IMR-90 (cell line): ENCODE measurements at regions of chr5 and their contacts with region 1.

Region 1: DNA sequence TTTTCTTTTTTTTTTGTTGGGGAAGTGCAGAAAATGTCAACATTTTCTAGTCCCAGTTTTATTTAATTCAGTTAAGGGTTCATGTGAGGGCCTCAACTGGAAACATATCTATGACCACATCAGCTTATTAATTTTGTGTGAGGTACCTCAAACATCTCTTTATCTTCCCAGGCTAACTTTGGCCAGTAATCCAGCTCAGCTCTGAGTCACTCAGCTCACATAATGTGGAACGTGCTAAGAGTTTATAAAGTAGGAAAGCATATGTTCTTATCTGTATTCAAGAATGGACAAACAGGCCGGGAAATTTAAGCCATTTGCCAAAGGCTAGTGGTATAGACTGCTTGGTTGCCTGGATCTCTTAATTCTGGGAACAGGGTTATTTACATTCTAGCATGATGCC is 118.4 kb downstream of the INSYN2B start:
- DNase-seq: peak; percentile 96
- ATAC-seq: peak; percentile 95
- H3K4me3 ChIP-seq: no peak overlapping the region
- H3K27ac ChIP-seq: no peak overlapping the region
- H3K4me1 ChIP-seq: peaks cover 2% of the 10 kb centered on the region
- H3K27me3 ChIP-seq: no peaks in the 10 kb centered on the region
- CTCF ChIP-seq: no peak
- POLR2A ChIP-seq: no peak
- RAD21 ChIP-seq: peak; percentile 4; the same call in 1 of the 2 replicates

Region 2: GRCh38 chr5:169019871-169020501 is 841.9 kb before region 1 on chr5:
- CTCF ChIA-PET with region 1: no interaction called
- POLR2A ChIA-PET with region 1: no interaction called
- dilution Hi-C with region 1: no loop called
- in situ Hi-C with region 1: no loop called
- intact Hi-C with region 1: no loop called
- DNase-seq: no peak
- ATAC-seq: no peak
- H3K4me3 ChIP-seq: no peak overlapping the region
- H3K27ac ChIP-seq: no peak overlapping the region
- H3K4me1 ChIP-seq: no peaks in the 10 kb centered on the region
- H3K27me3 ChIP-seq: no peaks in the 10 kb centered on the region; the same call in 1 of the 2 replicates
- CTCF ChIP-seq: no peak
- POLR2A ChIP-seq: no peak
- RAD21 ChIP-seq: no peak

Region 3: DNA sequence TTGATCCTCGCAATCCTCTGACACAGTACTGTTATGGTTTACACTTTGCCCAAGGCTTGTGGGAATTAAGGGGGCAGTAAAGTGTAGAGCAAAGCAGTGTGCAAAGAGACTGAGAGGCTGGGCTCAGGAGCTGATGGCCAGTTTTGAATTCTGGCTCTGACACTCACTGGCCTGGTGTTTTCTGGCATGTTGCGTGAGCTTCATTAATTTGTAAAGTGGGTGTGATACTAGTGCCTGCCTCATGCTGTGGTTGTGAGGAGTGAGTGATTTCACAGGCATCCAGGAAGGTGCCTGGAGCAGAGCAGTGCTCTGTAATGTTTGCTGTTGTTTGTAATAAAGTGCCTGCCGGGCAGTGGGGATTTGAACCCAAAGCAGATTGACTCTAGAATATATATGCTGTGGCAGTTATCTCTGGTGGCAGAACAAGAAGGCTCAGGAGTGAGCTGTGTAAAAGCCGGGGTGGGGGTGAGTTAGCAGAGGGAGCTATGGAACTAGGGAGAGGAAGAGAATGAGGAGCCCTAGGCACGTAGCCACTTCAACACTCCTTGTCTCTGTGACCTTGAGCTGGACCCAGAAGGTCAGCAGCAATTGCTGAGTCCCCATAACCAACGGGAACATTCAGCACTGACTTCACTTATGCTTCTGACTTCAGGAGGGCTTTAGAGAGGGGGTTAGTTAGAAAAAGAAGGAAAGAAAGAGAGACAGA is 116.3 kb before region 1 on chr5:
- CTCF ChIA-PET with region 1: no interaction called
- POLR2A ChIA-PET with region 1: no interaction called
- dilution Hi-C with region 1: no loop called
- in situ Hi-C with region 1: no loop called
- intact Hi-C with region 1: loop called (anchors 5 kb)
- DNase-seq: peak; percentile 33
- ATAC-seq: peak; percentile 76
- H3K4me3 ChIP-seq: no peak overlapping the region
- H3K27ac ChIP-seq: no peak overlapping the region
- H3K4me1 ChIP-seq: peaks cover 8% of the 10 kb centered on the region
- H3K27me3 ChIP-seq: no peaks in the 10 kb centered on the region
- CTCF ChIP-seq: no peak
- POLR2A ChIP-seq: no peak
- RAD21 ChIP-seq: no peak

Region 4: GRCh38 chr5:169997798-169998197 is 135.9 kb after region 1 on chr5:
- CTCF ChIA-PET with region 1: no interaction called
- POLR2A ChIA-PET with region 1: no interaction called
- dilution Hi-C with region 1: no loop called
- in situ Hi-C with region 1: no loop called
- intact Hi-C with region 1: no loop called
- DNase-seq: no peak
- ATAC-seq: no peak
- H3K4me3 ChIP-seq: no peak overlapping the region
- H3K27ac ChIP-seq: no peak overlapping the region
- H3K4me1 ChIP-seq: no peaks in the 10 kb centered on the region
- H3K27me3 ChIP-seq: no peaks in the 10 kb centered on the region; the same call in 1 of the 2 replicates
- CTCF ChIP-seq: no peak
- POLR2A ChIP-seq: no peak
- RAD21 ChIP-seq: no peak